ENCODE measurements at regions of chr2 and their contacts with region 1.

Region 1: DNA sequence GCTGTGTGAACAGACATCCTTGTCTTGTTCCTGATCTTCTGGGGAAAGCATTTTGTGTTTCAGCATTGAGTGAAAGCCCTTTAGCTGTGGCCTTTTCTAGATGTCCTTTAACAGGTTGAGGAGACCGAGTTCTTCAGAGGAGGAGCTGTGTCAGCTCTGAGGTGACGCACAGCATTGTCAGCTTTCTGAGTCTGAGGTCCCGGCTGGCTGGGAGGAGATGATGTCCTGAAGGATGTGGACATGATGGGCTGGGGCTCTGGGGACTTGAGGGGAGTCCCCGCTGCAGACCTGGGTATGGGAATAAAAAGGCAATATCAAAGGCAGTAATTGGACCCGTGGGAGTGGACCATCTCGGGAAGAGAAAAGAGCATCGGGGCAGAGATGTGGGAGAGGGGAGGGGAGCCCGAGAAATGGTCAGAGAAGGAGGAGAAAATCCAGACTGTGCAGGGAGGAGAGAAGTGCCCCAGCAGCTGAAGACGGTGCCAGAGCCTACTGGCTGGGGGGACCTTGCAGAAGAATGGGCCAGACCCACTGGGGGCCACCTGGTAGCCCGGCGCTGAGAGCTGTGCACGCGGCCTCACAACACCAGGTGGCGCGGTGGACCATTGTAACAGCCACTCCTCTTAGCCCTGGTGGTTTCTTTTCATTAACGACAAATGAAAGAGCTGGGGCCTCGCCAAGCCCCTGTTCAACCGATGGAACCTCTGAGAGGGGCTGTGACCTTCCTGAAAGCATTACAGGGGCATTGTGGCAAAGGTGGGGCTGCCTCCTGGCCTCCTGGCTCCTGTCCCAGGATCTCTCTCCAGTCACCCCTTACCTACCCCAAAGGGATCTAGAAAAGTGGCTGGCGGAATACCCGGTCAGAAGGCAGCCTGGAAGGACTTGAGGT is 61.6 kb downstream of the ST3GAL5 start:
- DNase-seq: peak; percentile 43
- ATAC-seq: peak; percentile 98
- H3K4me3 ChIP-seq: peak overlapping the region in 1 of 2 experiments; percentile 41; a peak in 2 of 4 replicates
- H3K27ac ChIP-seq: no peak overlapping the region
- H3K4me1 ChIP-seq: 0 out of 2 replicates have a peak, but pooled peaks cover 3% of the 10 kb centered on the region
- H3K27me3 ChIP-seq: peaks cover 5% of the 10 kb centered on the region; the same call in 1 of the 2 replicates
- CTCF ChIP-seq: peak; percentile 94

Region 2: GRCh38 chr2:86020984-86021383 is 193.8 kb after region 1 on chr2:
- CTCF ChIA-PET with region 1: interaction called, 6 read pairs
- POLR2A ChIA-PET with region 1: no interaction called
- in situ Hi-C with region 1: no loop called
- intact Hi-C with region 1: loop called (anchors 5 kb)
- DNase-seq: no peak
- ATAC-seq: peak; percentile 19
- H3K4me3 ChIP-seq: no peak overlapping the region
- H3K27ac ChIP-seq: no peak overlapping the region
- H3K4me1 ChIP-seq: no peaks in the 10 kb centered on the region
- H3K27me3 ChIP-seq: no peaks in the 10 kb centered on the region
- CTCF ChIP-seq: no peak

Region 3: DNA sequence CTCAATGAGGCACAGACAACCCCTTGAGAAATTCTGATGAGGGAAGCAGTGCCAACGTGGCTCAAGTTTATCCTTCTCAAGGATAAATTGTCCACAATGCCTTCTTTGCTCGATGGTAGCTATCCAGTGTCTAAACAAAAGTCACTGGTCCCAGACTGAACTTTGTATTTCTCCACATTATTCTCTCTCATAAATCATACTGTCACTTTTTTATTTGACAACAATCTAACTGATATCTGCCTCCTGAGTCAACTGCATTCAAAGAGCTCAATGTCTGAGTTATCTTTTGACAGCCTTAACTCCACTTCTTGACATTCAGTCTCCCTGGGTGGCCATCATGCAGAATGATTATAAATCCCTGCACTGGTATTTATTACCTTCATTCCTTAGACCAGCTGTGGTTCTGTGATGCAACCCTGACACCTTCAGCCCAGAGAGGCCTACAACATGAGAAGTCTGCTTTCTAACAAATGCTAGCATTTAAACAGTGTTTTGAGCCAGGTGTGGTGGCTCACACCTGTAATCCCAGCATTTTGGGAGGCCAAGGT is 329.8 kb after region 1 on chr2:
- CTCF ChIA-PET with region 1: interaction called, 10 read pairs
- POLR2A ChIA-PET with region 1: no interaction called
- in situ Hi-C with region 1: no loop called
- intact Hi-C with region 1: no loop called
- DNase-seq: no peak
- ATAC-seq: no peak
- H3K4me3 ChIP-seq: no peak overlapping the region
- H3K27ac ChIP-seq: no peak overlapping the region
- H3K4me1 ChIP-seq: no peaks in the 10 kb centered on the region
- H3K27me3 ChIP-seq: no peaks in the 10 kb centered on the region
- CTCF ChIP-seq: no peak

Measured in Panc1 (cell line).